Heart left ventricle (tissue), 16 donors: ENCODE measurements at regions of chr10 and their contacts with region 1.

Region 1: DNA sequence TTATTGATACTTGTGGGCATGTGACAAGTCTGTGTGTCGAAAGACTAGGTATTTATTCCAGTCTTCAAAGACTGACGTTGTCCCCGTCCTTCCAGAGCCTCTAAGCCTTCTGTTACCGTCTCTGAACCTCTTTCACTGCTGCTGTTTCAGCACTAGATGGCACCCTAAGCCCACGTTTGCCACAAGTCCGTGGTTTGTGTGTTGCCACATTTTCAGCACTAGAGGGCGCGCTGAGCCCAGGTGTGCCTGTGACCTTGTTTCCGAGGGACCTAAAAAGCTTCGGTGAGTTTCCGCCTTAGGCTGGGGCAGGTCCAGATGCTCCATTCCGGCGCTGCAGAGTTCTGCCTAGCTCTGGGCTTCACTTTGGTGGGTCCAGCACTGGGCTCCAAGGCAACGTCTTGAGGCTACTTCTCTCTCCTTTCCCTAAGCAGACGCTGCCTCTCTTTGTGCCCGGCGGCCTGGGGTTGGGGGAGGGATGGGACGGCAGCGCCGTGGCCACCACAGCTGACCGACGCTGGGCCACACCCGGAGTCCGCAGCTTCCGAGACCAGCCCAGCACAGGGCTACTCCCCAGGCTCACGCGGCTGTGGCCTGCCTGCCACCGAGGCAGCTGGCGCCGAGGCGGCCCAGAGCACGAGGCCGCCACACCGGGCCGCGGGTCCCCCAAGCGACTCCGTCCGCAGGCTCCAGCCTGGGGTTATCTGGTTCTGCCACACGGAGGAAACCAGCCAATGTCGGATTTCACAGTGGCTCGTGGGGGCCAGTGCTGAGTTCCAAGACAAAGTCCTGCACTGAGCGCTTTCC is 520.2 kb downstream of the REEP3 start:
- DNase-seq: peak; percentile 56 to 76 (median 61)
- ATAC-seq: peak; percentile 50 to 92 (median 86)
- H3K4me3 ChIP-seq: peak overlapping the region in 10 of 12 donors; percentile 21 to 54 (median 44)
- H3K27ac ChIP-seq: no peak overlapping the region
- H3K4me1 ChIP-seq: peaks cover 0 to 26% (median 5%) of the 10 kb centered on the region in 12 donors
- H3K27me3 ChIP-seq: peaks cover 0 to 2% (median 0%) of the 10 kb centered on the region in 9 donors
- CTCF ChIP-seq: peak; percentile 92 to 99 (median 98)
- POLR2A ChIP-seq: no peak

Region 2: DNA sequence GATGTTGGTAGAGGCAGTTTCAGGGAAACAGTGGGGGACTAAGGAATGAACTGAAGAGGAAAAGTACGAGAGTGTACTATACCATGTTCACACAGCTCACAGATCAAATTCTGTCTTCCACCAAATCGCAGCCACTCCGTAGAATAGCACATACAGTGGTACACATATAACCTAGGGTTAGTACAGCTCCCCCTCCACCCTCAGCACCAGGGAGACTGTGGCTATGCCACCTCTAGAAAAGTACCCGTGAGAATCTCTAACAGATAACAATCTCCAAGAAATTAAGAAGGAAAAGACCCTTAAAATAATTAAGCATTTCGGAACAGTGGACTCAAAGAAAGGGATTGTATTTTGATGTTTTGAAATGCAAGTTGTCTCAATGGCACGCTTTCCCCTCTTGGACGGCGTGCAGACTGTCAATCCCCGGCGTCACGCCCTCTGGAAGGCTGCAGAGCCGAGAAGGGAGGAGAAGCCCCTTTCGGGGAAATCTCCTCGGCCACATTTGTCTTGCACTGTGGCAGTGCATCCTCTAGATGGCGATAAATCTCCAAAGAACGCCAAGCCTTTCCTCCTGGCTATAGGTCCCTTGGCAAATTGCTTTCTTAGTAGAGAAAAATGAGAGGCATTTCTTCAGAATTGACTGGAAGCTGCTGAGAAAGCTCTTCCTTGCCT is 175.2 kb before region 1 on chr10:
- intact Hi-C with region 1: loop called in 1 of 10 experiments (anchors 5 kb)
- DNase-seq: peak in 4 of 5 donors; percentile 20 to 39 (median 31)
- ATAC-seq: peak in 3 of 4 donors; percentile 60 to 76 (median 62)
- H3K4me3 ChIP-seq: peak overlapping the region in 5 of 12 donors; percentile 2 to 18 (median 9)
- H3K27ac ChIP-seq: no peak overlapping the region
- H3K4me1 ChIP-seq: peaks cover 0 to 12% (median 4%) of the 10 kb centered on the region in 12 donors
- H3K27me3 ChIP-seq: peaks cover 0 to 25% (median 3%) of the 10 kb centered on the region in 9 donors
- CTCF ChIP-seq: peak; percentile 70 to 87 (median 81)
- POLR2A ChIP-seq: no peak

Region 3: GRCh38 chr10:63878428-63878827 is 163.0 kb before region 1 on chr10:
- intact Hi-C with region 1: loop called in 2 of 10 experiments (anchors 2 to 5 kb)
- DNase-seq: no peak
- ATAC-seq: no peak
- H3K4me3 ChIP-seq: no peak overlapping the region
- H3K27ac ChIP-seq: no peak overlapping the region
- H3K4me1 ChIP-seq: no peaks in the 10 kb centered on the region
- H3K27me3 ChIP-seq: no peaks in the 10 kb centered on the region
- CTCF ChIP-seq: no peak
- POLR2A ChIP-seq: no peak

Region 4: DNA sequence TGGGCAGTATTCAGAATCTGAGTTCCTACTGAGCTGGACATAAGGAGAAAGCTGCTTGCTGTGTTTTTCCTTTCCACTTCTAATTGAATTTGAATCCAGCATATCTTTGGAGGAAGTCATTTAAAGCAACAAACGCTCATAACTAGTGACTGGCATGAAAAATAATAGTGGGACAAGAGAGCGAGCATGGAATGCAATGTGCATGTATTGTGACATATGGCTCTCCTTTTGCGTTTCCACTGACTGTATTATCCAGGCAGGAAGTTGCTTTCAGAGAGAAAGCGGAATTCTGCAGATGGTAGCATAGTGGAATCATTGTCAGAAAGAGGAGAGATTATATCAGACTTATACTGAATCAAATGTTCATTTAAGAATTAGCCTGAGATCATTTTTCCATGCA is 151.6 kb before region 1 on chr10:
- intact Hi-C with region 1: no loop called
- DNase-seq: no peak
- ATAC-seq: no peak
- H3K4me3 ChIP-seq: no peak overlapping the region
- H3K27ac ChIP-seq: no peak overlapping the region
- H3K4me1 ChIP-seq: no peaks in the 10 kb centered on the region
- H3K27me3 ChIP-seq: peaks cover 0 to 3% (median 0%) of the 10 kb centered on the region in 9 donors
- CTCF ChIP-seq: no peak
- POLR2A ChIP-seq: no peak